Panc1 (cell line): ENCODE measurements at regions of chr7 and their contacts with region 1.

Region 1: GRCh38 chr7:47991741-47992311 is 12.4 kb upstream of the HUS1 start:
- DNase-seq: peak; percentile 75
- ATAC-seq: peak; percentile 100
- H3K4me3 ChIP-seq: peak overlapping the region; percentile 44 to 56
- H3K27ac ChIP-seq: peak overlapping the region; percentile 96
- H3K4me1 ChIP-seq: peaks cover 22% of the 10 kb centered on the region
- H3K27me3 ChIP-seq: no peaks in the 10 kb centered on the region
- CTCF ChIP-seq: peak; percentile 94

Region 2: GRCh38 chr7:47670729-47671128 is 321.1 kb before region 1 on chr7:
- CTCF ChIA-PET with region 1: no interaction called
- POLR2A ChIA-PET with region 1: no interaction called
- in situ Hi-C with region 1: no loop called
- intact Hi-C with region 1: no loop called
- DNase-seq: no peak
- ATAC-seq: no peak
- H3K4me3 ChIP-seq: no peak overlapping the region
- H3K27ac ChIP-seq: peak overlapping the region; percentile 87; the same call in 1 of the 2 replicates
- H3K4me1 ChIP-seq: peaks cover 12% of the 10 kb centered on the region; the same call in 1 of the 2 replicates
- H3K27me3 ChIP-seq: no peaks in the 10 kb centered on the region
- CTCF ChIP-seq: no peak

Region 3: GRCh38 chr7:47968847-47969774 is 22.7 kb before region 1 on chr7:
- CTCF ChIA-PET with region 1: no interaction called
- POLR2A ChIA-PET with region 1: no interaction called
- in situ Hi-C with region 1: no loop called
- intact Hi-C with region 1: no loop called
- DNase-seq: no peak
- ATAC-seq: peak; percentile 86
- H3K4me3 ChIP-seq: no peak overlapping the region
- H3K27ac ChIP-seq: peak overlapping the region; percentile 24
- H3K4me1 ChIP-seq: no peaks in the 10 kb centered on the region
- H3K27me3 ChIP-seq: no peaks in the 10 kb centered on the region
- CTCF ChIP-seq: peak; percentile 96

Region 4: GRCh38 chr7:48074204-48074654 is 82.4 kb after region 1 on chr7:
- CTCF ChIA-PET with region 1: no interaction called
- POLR2A ChIA-PET with region 1: no interaction called
- in situ Hi-C with region 1: loop called (anchors 10 kb)
- intact Hi-C with region 1: no loop called
- DNase-seq: no peak
- ATAC-seq: peak; percentile 21; the same call in 1 of the 2 replicates
- H3K4me3 ChIP-seq: no peak overlapping the region
- H3K27ac ChIP-seq: peak overlapping the region; percentile 4; the same call in 1 of the 2 replicates
- H3K4me1 ChIP-seq: no peaks in the 10 kb centered on the region
- H3K27me3 ChIP-seq: no peaks in the 10 kb centered on the region
- CTCF ChIP-seq: no peak

Region 5: DNA sequence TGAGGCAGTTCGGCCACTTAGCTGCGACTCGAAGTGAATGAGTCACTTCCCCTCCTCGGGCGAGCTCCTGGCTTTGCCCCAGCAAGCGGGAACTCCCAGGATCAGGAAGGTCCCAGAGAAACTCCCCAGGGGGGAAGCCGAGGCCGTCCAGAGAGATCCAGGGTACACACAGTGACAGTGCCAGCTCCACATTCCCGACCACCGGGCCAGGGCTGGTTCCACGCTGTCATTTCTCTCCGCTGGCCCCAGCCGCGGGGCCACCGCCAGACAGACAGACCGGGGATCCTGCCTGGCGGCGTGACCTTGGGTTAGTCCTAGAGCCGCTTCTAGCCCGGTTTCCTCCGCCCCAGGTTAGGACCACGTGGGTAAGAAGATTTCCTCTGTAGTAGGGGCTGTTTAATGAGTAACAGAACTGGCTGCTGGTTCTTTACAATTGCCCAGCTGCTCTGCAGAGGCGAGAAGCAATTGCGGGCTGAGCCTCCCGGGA is 96.8 kb after region 1 on chr7:
- CTCF ChIA-PET with region 1: interaction called, 8 read pairs
- POLR2A ChIA-PET with region 1: no interaction called
- in situ Hi-C with region 1: no loop called
- intact Hi-C with region 1: loop called (anchors 5 kb)
- DNase-seq: peak; percentile 91
- ATAC-seq: peak; percentile 72
- H3K4me3 ChIP-seq: peak overlapping the region; percentile 57 to 87
- H3K27ac ChIP-seq: peak overlapping the region; percentile 100
- H3K4me1 ChIP-seq: peaks cover 73% of the 10 kb centered on the region
- H3K27me3 ChIP-seq: no peaks in the 10 kb centered on the region
- CTCF ChIP-seq: no peak

Region 6: DNA sequence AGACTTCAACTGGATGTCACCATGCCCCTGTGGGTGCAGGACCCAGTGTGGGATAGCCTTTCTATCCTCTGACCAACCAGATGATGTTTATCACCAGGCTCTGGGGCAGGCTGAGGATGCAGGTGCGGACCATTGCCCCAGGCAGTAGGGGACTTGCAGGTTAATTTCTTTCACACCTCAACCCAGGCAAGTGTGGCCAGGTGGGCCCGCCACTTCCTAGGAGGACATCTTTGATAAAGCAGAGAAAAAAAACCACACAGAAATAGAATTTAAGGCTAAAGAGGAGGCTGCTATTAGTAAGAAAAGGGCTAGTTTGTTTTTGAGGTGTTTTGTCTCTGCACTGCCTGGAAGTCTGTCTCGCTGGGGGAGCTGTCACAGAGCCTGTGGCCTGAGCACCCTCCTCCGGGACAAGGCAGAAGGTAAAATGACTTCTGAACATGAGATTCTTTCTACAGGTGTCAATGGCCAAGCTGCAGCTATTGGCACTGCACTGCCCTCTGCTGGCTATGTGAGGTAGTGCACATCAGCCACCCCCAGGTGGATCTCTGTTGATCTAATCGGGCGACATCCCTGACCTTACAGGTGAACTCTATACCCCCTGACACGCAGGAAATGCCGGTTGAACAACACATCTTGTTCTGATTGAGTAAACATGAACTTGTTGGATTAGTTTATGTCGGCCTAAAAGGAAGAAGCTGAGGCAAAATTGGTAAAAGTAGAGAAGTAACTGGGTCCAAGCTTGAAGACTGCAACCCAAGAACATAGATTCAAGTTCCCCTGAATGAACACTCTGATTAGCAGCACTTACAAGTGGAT is 118.2 kb after region 1 on chr7:
- CTCF ChIA-PET with region 1: interaction called, 22 read pairs
- POLR2A ChIA-PET with region 1: no interaction called
- in situ Hi-C with region 1: no loop called
- intact Hi-C with region 1: loop called (anchors 1 kb)
- DNase-seq: peak; percentile 90
- ATAC-seq: peak; percentile 77
- H3K4me3 ChIP-seq: no peak overlapping the region
- H3K27ac ChIP-seq: peak overlapping the region; percentile 55
- H3K4me1 ChIP-seq: peaks cover 50% of the 10 kb centered on the region
- H3K27me3 ChIP-seq: no peaks in the 10 kb centered on the region
- CTCF ChIP-seq: peak; percentile 100

Region 7: GRCh38 chr7:48154792-48155413 is 163.1 kb after region 1 on chr7:
- CTCF ChIA-PET with region 1: interaction called, 5 read pairs
- POLR2A ChIA-PET with region 1: no interaction called
- in situ Hi-C with region 1: no loop called
- intact Hi-C with region 1: loop called (anchors 5 kb)
- DNase-seq: peak; percentile 54
- ATAC-seq: peak; percentile 96
- H3K4me3 ChIP-seq: no peak overlapping the region
- H3K27ac ChIP-seq: peak overlapping the region; percentile 71; the same call in 1 of the 2 replicates
- H3K4me1 ChIP-seq: peaks cover 4% of the 10 kb centered on the region; the same call in 1 of the 2 replicates
- H3K27me3 ChIP-seq: no peaks in the 10 kb centered on the region
- CTCF ChIP-seq: peak; percentile 90

Region 8: DNA sequence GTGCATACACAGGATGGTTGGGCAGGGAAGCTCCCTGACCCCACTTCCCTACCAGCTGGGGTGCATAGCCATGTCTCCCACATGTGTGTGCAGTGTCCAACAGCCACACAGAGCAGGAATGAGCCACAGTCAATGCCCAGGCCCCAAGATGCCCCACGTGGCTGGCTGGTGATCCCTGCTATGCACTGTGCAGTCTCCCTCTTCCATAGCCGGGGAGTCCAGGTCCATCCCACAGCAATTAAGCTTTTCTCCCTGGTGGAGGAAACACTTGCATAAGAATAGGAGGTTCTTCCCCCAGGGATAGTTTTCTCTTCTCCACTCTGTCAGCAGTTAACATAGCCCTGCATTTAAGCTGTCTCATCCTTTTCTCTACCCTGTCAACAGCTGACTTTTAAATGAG is 1385.0 kb after region 1 on chr7:
- CTCF ChIA-PET with region 1: interaction called, 12 read pairs
- POLR2A ChIA-PET with region 1: no interaction called
- in situ Hi-C with region 1: no loop called
- intact Hi-C with region 1: no loop called
- DNase-seq: no peak
- ATAC-seq: no peak
- H3K4me3 ChIP-seq: no peak overlapping the region
- H3K27ac ChIP-seq: no peak overlapping the region
- H3K4me1 ChIP-seq: no peaks in the 10 kb centered on the region
- H3K27me3 ChIP-seq: no peaks in the 10 kb centered on the region
- CTCF ChIP-seq: no peak